CD4-positive, alpha-beta memory T cell (primary cell): ENCODE measurements at regions of chr21 and their contacts with region 1.

Region 1: GRCh38 chr21:32392880-32393676 is at the start of gene URB1:
- DNase-seq: peak; percentile 90 to 95 (median 92)
- H3K4me3 ChIP-seq: peak within 1 kb of the TSS; percentile 86 to 90
- H3K4me3 Mint-ChIP-seq: peak within 1 kb of the TSS; percentile 84 to 89 (median 88)
- H3K27ac ChIP-seq: peak within 1 kb of the TSS; percentile 68
- H3K27ac Mint-ChIP-seq: peak within 1 kb of the TSS; percentile 72 to 91 (median 84)
- H3K4me1 ChIP-seq: peaks cover 30% of the 10 kb centered on the region
- H3K4me1 Mint-ChIP-seq: peaks cover 23 to 54% (median 43%) of the 10 kb centered on the region in 4 donors
- H3K27me3 ChIP-seq: no peaks in the 10 kb centered on the region
- H3K27me3 Mint-ChIP-seq: peaks cover 2 to 4% of the 10 kb centered on the region in 2 donors
- total RNA-seq, gene URB1: 13.9 to 15.2 TPM

Region 2: DNA sequence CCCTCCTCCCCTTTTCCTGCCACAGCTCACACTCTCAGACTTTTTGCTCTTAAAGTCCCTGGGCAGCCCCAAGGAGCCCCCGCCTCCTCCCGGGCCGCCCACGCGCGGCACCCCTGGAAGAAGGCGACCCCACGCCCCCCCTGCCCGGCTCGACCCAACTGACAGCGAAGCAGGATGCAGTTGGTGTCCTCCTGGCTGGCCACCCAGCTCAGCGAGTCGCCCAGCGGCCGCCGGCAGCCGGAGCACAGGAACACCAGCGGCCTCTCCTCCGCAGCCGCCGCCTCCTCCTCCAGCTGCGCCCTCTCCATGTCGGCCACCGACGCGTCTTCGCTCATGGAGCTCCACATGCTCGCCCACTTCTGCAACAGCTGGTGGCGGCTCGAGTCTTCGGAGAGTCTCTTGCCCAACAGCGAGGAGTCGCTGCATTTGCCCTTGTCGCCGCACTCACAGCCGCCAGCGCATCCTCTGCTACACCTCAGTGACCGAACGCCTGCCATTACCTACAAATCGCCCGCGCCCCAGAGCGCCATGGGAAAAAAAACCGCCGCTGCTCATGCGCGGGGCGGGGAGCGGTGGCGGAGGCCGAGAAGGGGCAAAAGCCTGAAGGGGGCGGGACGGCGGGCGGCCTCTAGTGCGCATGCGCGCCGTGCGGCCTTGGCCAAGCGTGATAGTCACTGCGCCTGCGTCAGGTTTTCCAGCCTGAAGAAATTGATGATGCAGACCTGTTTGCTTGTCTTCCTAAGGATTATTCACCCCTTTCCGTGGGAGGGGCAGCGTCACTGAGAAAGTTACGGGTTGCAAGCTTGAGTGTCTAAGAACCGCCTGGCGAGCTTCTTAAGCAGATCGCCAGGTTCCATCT is 114.3 kb before region 1 on chr21 and contains the start of gene MIS18A:
- CTCF ChIA-PET with region 1: no interaction called
- POLR2A ChIA-PET with region 1: no interaction called
- intact Hi-C with region 1: loop called (anchors 2 kb)
- DNase-seq: peak; percentile 94 to 97 (median 95)
- H3K4me3 ChIP-seq: peak within 1 kb of the TSS; percentile 73 to 84
- H3K4me3 Mint-ChIP-seq: peak within 1 kb of the TSS; percentile 96 to 100 (median 99)
- H3K27ac ChIP-seq: peak within 1 kb of the TSS; percentile 67
- H3K27ac Mint-ChIP-seq: peak within 1 kb of the TSS; percentile 93 to 98 (median 96)
- H3K4me1 ChIP-seq: peaks cover 23% of the 10 kb centered on the region
- H3K4me1 Mint-ChIP-seq: peaks cover 17 to 36% (median 27%) of the 10 kb centered on the region in 4 donors
- H3K27me3 ChIP-seq: no peaks in the 10 kb centered on the region
- H3K27me3 Mint-ChIP-seq: no peaks in the 10 kb centered on the region
- total RNA-seq, gene MIS18A: 6.7 to 9.5 TPM

Region 3: GRCh38 chr21:32320059-32320458 is 73.0 kb before region 1 on chr21:
- CTCF ChIA-PET with region 1: no interaction called
- POLR2A ChIA-PET with region 1: no interaction called
- intact Hi-C with region 1: no loop called
- DNase-seq: no peak
- H3K4me3 ChIP-seq: no peak overlapping the region
- H3K4me3 Mint-ChIP-seq: no peak overlapping the region
- H3K27ac ChIP-seq: no peak overlapping the region
- H3K27ac Mint-ChIP-seq: no peak overlapping the region
- H3K4me1 ChIP-seq: no peaks in the 10 kb centered on the region
- H3K4me1 Mint-ChIP-seq: no peaks in the 10 kb centered on the region
- H3K27me3 ChIP-seq: no peaks in the 10 kb centered on the region
- H3K27me3 Mint-ChIP-seq: no peaks in the 10 kb centered on the region

Region 4: GRCh38 chr21:32412162-32413014 is 19.3 kb after region 1 on chr21 and contains the start of gene EVA1C:
- CTCF ChIA-PET with region 1: interaction called, 7 read pairs
- POLR2A ChIA-PET with region 1: interaction called, 47 read pairs
- intact Hi-C with region 1: loop called (anchors 1 kb)
- DNase-seq: peak; percentile 81 to 87 (median 85)
- H3K4me3 ChIP-seq: peak within 1 kb of the TSS; percentile 40 to 83
- H3K4me3 Mint-ChIP-seq: peak within 1 kb of the TSS; percentile 94 to 98 (median 96)
- H3K27ac ChIP-seq: peak within 1 kb of the TSS; percentile 86
- H3K27ac Mint-ChIP-seq: peak within 1 kb of the TSS; percentile 95 to 99 (median 97)
- H3K4me1 ChIP-seq: peaks cover 34% of the 10 kb centered on the region
- H3K4me1 Mint-ChIP-seq: peaks cover 32 to 71% (median 43%) of the 10 kb centered on the region in 4 donors
- H3K27me3 ChIP-seq: no peaks in the 10 kb centered on the region
- H3K27me3 Mint-ChIP-seq: no peaks in the 10 kb centered on the region
- total RNA-seq, gene EVA1C: 17.1 to 17.2 TPM

Region 5: DNA sequence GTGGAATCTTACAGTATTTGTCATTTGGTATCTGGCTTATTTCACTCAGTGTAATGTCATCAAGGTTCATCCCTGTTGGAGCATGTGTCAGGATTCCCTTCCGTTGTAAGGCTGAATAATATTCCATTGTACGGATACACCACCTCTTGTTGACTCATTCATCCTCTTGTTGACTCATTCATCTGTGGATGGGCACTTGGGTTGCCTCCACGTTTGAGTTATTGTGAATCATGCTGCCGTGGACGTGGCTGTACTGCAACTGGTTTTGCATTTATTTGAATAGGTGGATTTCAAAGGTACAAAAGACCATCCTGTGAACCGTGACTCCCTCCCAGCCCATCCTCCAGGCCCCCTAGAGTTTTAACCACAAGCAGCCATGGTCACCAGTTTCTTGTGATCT is 204.1 kb after region 1 on chr21:
- CTCF ChIA-PET with region 1: interaction called, 43 read pairs
- POLR2A ChIA-PET with region 1: interaction called, 5 read pairs
- intact Hi-C with region 1: no loop called
- DNase-seq: no peak
- H3K4me3 ChIP-seq: no peak overlapping the region
- H3K4me3 Mint-ChIP-seq: no peak overlapping the region
- H3K27ac ChIP-seq: no peak overlapping the region
- H3K27ac Mint-ChIP-seq: peak overlapping the region in 1 of 7 donors; percentile 15
- H3K4me1 ChIP-seq: no peaks in the 10 kb centered on the region
- H3K4me1 Mint-ChIP-seq: peaks cover 0 to 3% (median 0%) of the 10 kb centered on the region in 4 donors
- H3K27me3 ChIP-seq: no peaks in the 10 kb centered on the region
- H3K27me3 Mint-ChIP-seq: no peaks in the 10 kb centered on the region

Region 6: DNA sequence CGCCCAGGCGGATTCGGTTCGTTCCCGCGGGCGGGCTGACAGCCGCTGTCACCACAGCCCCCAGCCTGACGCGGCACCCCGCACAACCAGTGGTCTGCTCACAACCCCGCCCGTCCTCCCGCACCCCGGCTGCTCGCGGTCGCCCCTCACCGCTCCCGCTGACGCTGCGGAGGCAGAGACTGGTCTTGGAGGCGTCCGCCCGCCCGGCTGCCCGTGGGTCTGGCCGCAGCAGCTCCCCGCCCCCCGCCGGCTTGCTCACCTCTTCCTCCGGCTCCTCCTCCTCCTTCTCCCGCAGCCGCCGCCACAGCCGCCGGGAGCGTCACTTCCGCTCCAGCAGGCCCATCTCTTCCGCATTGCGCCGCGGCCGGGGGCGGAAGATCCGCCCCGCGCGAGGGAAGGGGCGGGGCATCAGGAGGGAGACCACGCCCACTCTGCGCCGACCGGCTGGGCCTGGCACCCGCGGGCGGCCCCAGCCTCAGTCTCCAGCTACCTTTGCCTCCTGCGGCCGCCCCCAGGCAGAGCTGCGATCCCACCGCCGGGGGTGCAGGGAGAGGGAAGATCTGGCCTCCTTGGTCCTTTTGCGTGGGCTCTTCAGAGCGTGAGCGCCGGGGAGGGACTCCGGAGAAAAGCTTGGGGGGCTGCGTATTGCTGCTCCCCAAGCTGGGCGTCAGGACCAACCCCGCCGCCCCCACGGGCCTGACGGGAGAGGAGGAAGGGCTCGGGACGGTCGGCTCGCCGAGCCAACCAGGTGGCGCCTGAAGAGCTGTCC is 334.8 kb after region 1 on chr21 and contains the start of gene SYNJ1:
- CTCF ChIA-PET with region 1: no interaction called
- POLR2A ChIA-PET with region 1: no interaction called
- intact Hi-C with region 1: loop called (anchors 1 kb)
- DNase-seq: peak; percentile 94 to 95 (median 94)
- H3K4me3 ChIP-seq: peak within 1 kb of the TSS; percentile 62 to 92
- H3K4me3 Mint-ChIP-seq: peak within 1 kb of the TSS; percentile 97 to 100 (median 98)
- H3K27ac ChIP-seq: peak within 1 kb of the TSS; percentile 75
- H3K27ac Mint-ChIP-seq: peak within 1 kb of the TSS; percentile 90 to 98 (median 98)
- H3K4me1 ChIP-seq: peaks cover 58% of the 10 kb centered on the region
- H3K4me1 Mint-ChIP-seq: peaks cover 38 to 76% (median 52%) of the 10 kb centered on the region in 4 donors
- H3K27me3 ChIP-seq: no peaks in the 10 kb centered on the region
- H3K27me3 Mint-ChIP-seq: no peaks in the 10 kb centered on the region
- total RNA-seq, gene SYNJ1: 27.6 to 29.4 TPM